Naive thymus-derived CD4-positive, alpha-beta T cell (primary cell): ENCODE measurements at regions of chr17 and their contacts with region 1.

Region 1: GRCh38 chr17:55264645-55265298 is at the start of gene HLF:
- DNase-seq: peak; percentile 34 to 78 (median 68)
- ATAC-seq: peak; percentile 96
- H3K4me3 ChIP-seq: peak within 1 kb of the TSS; percentile 58
- H3K4me3 Mint-ChIP-seq: peak within 1 kb of the TSS; percentile 74 to 85 (median 80)
- H3K27ac ChIP-seq: no peak within 1 kb of the TSS
- H3K27ac Mint-ChIP-seq: peak within 1 kb of the TSS in 2 of 9 donors; percentile 41 to 49
- H3K4me1 ChIP-seq: peaks cover 15% of the 10 kb centered on the region in 2 donors
- H3K4me1 Mint-ChIP-seq: peaks cover 8 to 37% (median 21%) of the 10 kb centered on the region in 7 donors
- H3K27me3 ChIP-seq: peaks cover 13 to 29% of the 10 kb centered on the region in 2 donors
- H3K27me3 Mint-ChIP-seq: peaks cover 50 to 90% (median 72%) of the 10 kb centered on the region in 5 donors
- total RNA-seq, gene HLF: 0.19 to 2.6 (median 0.48) TPM

Region 2: DNA sequence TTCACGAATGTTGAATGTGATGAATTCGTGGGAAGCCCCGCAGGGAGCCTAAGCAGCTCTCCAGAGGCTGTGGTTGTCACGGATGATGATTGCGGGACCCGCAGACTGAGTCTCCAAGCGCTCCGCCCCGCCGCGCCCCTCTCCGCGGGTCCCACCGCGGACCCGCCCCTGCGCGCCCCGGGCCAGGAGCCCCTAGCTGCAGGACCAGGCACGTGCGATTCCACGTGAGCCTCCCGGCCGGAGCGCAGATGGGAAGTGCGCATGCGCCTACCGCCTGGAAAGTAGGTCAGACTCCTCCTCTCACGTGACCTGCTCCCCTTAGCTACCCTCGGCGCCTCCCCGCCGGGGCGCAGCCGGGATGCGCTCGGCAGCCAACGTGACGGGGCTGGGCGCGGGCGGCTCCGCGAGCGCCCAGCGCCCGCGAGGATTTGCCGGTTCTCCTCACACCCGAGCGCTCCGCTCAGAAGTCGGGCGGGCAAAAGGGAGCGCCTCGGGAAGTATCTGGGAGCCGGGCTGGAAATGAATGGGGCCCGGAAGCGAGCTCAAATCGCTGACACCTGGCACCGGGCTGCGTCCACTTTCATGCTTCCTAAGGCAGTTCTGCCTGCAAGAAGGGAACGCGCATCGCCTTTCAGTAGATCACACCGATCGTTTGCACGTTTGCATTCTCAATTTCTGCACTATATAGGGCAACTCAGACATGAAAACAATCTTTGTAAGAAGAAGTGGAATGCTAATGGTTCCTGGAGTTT is 26.4 kb before region 1 on chr17:
- CTCF ChIA-PET with region 1: no interaction called
- POLR2A ChIA-PET with region 1: interaction called, 10 read pairs
- intact Hi-C with region 1: loop called (anchors 1 kb)
- DNase-seq: peak; percentile 60 to 81 (median 75)
- ATAC-seq: peak; percentile 92
- H3K4me3 ChIP-seq: peak overlapping the region; percentile 65
- H3K4me3 Mint-ChIP-seq: peak overlapping the region; percentile 84 to 94 (median 86)
- H3K27ac ChIP-seq: peak overlapping the region; percentile 14
- H3K27ac Mint-ChIP-seq: peak overlapping the region in 4 of 9 donors; percentile 16 to 76 (median 56)
- H3K4me1 ChIP-seq: peaks cover 6 to 19% of the 10 kb centered on the region in 2 donors
- H3K4me1 Mint-ChIP-seq: peaks cover 9 to 23% (median 19%) of the 10 kb centered on the region in 7 donors
- H3K27me3 ChIP-seq: no peaks in the 10 kb centered on the region
- H3K27me3 Mint-ChIP-seq: peaks cover 12 to 46% (median 21%) of the 10 kb centered on the region in 5 donors

Region 3: GRCh38 chr17:55341432-55341831 is 76.7 kb after region 1 on chr17:
- CTCF ChIA-PET with region 1: no interaction called
- POLR2A ChIA-PET with region 1: no interaction called
- intact Hi-C with region 1: no loop called
- DNase-seq: no peak
- ATAC-seq: no peak
- H3K4me3 ChIP-seq: no peak overlapping the region
- H3K4me3 Mint-ChIP-seq: no peak overlapping the region
- H3K27ac ChIP-seq: no peak overlapping the region
- H3K27ac Mint-ChIP-seq: no peak overlapping the region
- H3K4me1 ChIP-seq: peaks cover 0 to 27% of the 10 kb centered on the region in 2 donors
- H3K4me1 Mint-ChIP-seq: peaks cover 0 to 52% (median 12%) of the 10 kb centered on the region in 7 donors
- H3K27me3 ChIP-seq: no peaks in the 10 kb centered on the region
- H3K27me3 Mint-ChIP-seq: peaks cover 11 to 27% (median 15%) of the 10 kb centered on the region in 5 donors

Region 4: GRCh38 chr17:55750750-55751657 is 486.2 kb after region 1 on chr17 and contains the start of gene PCTP:
- CTCF ChIA-PET with region 1: no interaction called
- POLR2A ChIA-PET with region 1: no interaction called
- intact Hi-C with region 1: loop called in 1 of 2 experiments (anchors 10 kb)
- DNase-seq: peak; percentile 61 to 88 (median 76)
- ATAC-seq: peak; percentile 99
- H3K4me3 ChIP-seq: peak within 1 kb of the TSS; percentile 71
- H3K4me3 Mint-ChIP-seq: peak within 1 kb of the TSS; percentile 72 to 90 (median 86)
- H3K27ac ChIP-seq: peak within 1 kb of the TSS; percentile 52
- H3K27ac Mint-ChIP-seq: peak within 1 kb of the TSS; percentile 11 to 89 (median 60)
- H3K4me1 ChIP-seq: peaks cover 0 to 5% of the 10 kb centered on the region in 2 donors
- H3K4me1 Mint-ChIP-seq: peaks cover 7 to 26% (median 19%) of the 10 kb centered on the region in 7 donors
- H3K27me3 ChIP-seq: no peaks in the 10 kb centered on the region
- H3K27me3 Mint-ChIP-seq: peaks cover 19 to 39% (median 20%) of the 10 kb centered on the region in 5 donors
- total RNA-seq, gene PCTP: 2.7 to 7.4 (median 3.5) TPM